ENCODE measurements at regions of chr6 and their contacts with region 1.

Region 1: GRCh38 chr6:149834513-149835481 is 29.4 kb downstream of the LRP11 start:
- DNase-seq: peak in 4 of 5 donors; percentile 62 to 82 (median 72)
- H3K4me3 ChIP-seq: no peak overlapping the region
- H3K27ac ChIP-seq: no peak overlapping the region
- H3K4me1 ChIP-seq: no peaks in the 10 kb centered on the region
- H3K27me3 ChIP-seq: no peaks in the 10 kb centered on the region
- CTCF ChIP-seq: peak; percentile 93

Region 2: DNA sequence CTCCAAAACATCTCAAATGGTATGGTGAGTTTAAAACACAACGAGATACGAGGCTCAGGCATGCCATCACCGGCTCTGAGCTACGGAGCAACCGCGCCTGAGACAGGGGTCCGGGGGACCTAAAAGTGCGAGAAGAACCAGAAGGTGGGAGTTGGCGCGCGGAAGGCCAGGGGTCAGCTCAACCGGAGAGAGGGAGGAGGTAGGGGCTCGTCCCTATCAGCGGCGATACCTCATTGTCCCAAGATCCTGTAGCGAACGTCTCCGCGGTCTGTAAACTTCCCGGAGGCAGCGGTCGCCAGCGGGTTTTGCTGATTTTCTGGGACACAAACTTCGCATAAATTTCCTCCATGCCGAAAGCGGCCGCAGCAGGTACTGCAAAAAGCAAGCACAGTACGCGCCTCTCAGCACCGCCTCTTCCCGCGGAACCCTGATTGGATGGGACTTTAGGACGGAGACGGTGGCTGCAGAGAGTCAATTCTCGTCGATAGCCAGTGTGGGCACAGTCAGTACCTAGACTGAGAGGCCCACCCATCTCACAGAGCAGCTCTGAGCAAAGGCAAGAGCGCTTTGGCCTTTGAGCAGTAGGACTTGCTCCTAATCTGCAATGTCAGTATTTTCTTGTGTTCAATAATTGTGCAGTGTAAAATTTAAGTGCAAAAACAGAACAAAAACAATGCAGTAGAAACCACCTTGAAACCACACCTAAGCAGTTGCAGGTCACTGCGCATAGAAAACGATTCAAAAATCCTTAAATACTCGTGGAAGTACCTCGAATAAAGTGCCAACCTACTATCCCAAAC is 88.5 kb before region 1 on chr6 and contains the start of gene NUP43:
- intact Hi-C with region 1: no loop called
- DNase-seq: peak; percentile 95 to 97 (median 95)
- H3K4me3 ChIP-seq: peak within 1 kb of the TSS; percentile 66 to 91 (median 80)
- H3K27ac ChIP-seq: peak within 1 kb of the TSS in 1 of 2 donors; percentile 26
- H3K4me1 ChIP-seq: peaks cover 0 to 8% (median 7%) of the 10 kb centered on the region in 3 donors
- H3K27me3 ChIP-seq: no peaks in the 10 kb centered on the region
- CTCF ChIP-seq: peak; percentile 55
- total RNA-seq, gene NUP43: 36.1 TPM

Region 3: GRCh38 chr6:149925974-149926777 is 91.4 kb after region 1 on chr6:
- intact Hi-C with region 1: loop called (anchors 5 kb)
- DNase-seq: peak; percentile 89 to 93 (median 92)
- H3K4me3 ChIP-seq: peak overlapping the region; percentile 68 to 74 (median 74)
- H3K27ac ChIP-seq: no peak overlapping the region
- H3K4me1 ChIP-seq: peaks cover 0 to 4% (median 0%) of the 10 kb centered on the region in 3 donors
- H3K27me3 ChIP-seq: peaks cover 9% of the 10 kb centered on the region
- CTCF ChIP-seq: peak; percentile 96

Measured in kidney (tissue), 22 donors.